Activated CD4-positive, alpha-beta T cell treated with anti-CD3 and anti-CD28 coated beads for 36 hours (primary cell): ENCODE measurements at regions of chr11 and their contacts with region 1.

Region 1: DNA sequence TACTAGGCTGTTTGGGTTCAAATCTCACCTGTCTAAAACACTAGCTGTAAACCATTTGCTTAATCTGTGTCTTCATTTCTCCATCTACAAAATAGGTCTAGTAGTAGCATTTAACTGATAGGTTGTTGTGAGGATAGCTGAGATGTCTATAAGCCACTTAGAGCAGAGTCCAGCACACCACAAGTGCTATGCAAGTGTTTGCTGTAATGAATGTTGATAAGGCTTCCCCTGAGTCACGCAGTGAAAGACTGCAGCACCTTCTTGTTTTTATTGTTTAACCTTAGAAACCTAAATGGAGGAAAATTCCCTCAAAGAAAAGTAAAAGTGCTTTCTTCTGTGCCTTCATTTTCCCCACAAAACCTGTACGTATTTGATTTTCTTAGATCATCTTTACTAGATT is 23.1 kb upstream of the LDHA start:
- DNase-seq: no peak
- ATAC-seq: peak; percentile 33
- H3K4me3 Mint-ChIP-seq: no peak overlapping the region
- H3K27ac Mint-ChIP-seq: peak overlapping the region; percentile 13
- H3K4me1 Mint-ChIP-seq: peaks cover 5% of the 10 kb centered on the region
- H3K27me3 Mint-ChIP-seq: no peaks in the 10 kb centered on the region

Region 2: GRCh38 chr11:18277565-18278271 is 93.6 kb before region 1 on chr11:
- CTCF ChIA-PET with region 1: no interaction called
- POLR2A ChIA-PET with region 1: interaction called, 10 read pairs
- intact Hi-C with region 1: no loop called
- DNase-seq: no peak
- ATAC-seq: no peak
- H3K4me3 Mint-ChIP-seq: no peak overlapping the region
- H3K27ac Mint-ChIP-seq: no peak overlapping the region
- H3K4me1 Mint-ChIP-seq: peaks cover 8% of the 10 kb centered on the region
- H3K27me3 Mint-ChIP-seq: no peaks in the 10 kb centered on the region